ENCODE measurements at regions of chr7 and their contacts with region 1.

Region 1: GRCh38 chr7:85030893-85031292 is 156.0 kb downstream of the SEMA3D start:
- DNase-seq: peak; percentile 83
- H3K4me3 ChIP-seq: no peak overlapping the region
- H3K27ac ChIP-seq: no peak overlapping the region
- H3K4me1 ChIP-seq: peaks cover 5% of the 10 kb centered on the region
- H3K27me3 ChIP-seq: no peaks in the 10 kb centered on the region
- CTCF ChIP-seq: peak; percentile 75

Region 2: DNA sequence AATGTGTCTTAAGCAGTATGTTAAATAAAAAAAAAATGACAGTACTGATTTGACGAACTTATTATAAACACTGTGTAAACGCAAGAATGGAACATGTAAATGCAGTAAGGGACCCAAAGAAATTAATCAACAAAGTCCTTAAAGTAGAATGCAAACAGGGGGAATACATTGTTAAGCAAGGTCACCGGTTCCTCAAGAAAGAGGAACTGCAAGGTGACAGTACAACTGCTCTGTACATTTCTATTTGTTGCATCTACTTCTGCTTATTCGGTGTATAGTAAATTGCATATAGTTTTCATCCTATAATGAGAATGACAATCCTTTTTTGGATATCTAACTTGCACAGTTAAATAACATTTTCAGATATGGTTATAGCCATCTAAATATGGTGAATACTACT is 543.0 kb after region 1 on chr7:
- CTCF ChIA-PET with region 1: no interaction called
- POLR2A ChIA-PET with region 1: no interaction called
- intact Hi-C with region 1: no loop called
- DNase-seq: no peak
- H3K4me3 ChIP-seq: no peak overlapping the region
- H3K27ac ChIP-seq: no peak overlapping the region
- H3K4me1 ChIP-seq: no peaks in the 10 kb centered on the region
- H3K27me3 ChIP-seq: no peaks in the 10 kb centered on the region
- CTCF ChIP-seq: no peak

Region 3: DNA sequence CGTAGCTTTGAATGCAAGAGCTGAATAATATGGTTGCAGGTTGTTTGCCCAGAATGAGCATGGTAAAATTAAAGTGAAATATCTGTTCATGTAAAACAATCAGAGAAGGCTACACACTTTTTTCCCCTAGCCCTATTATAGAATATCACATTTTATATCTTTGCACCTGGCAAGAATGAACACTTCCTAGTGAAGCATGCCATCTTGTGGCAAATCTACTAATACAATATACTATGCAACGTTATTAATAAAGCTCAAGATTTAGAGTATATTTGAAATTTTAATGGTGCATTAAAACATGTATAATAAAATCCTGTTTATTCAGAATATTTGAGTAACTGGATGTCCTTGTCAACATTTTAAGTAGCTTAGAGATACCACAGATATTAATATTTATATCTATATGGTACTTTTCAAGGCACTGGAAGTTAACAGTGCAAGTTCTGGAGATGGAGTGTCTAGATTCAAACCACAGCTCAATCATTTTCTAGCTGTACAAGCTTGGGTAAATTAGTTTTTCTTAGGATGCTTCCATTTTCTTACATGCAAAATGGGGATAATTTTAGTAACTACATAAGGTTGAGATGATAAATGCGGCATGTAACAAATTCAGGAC is 799.0 kb after region 1 on chr7:
- CTCF ChIA-PET with region 1: interaction called, 6 read pairs
- POLR2A ChIA-PET with region 1: no interaction called
- intact Hi-C with region 1: loop called (anchors 5 kb)
- DNase-seq: peak; percentile 36
- H3K4me3 ChIP-seq: no peak overlapping the region
- H3K27ac ChIP-seq: no peak overlapping the region
- H3K4me1 ChIP-seq: no peaks in the 10 kb centered on the region
- H3K27me3 ChIP-seq: no peaks in the 10 kb centered on the region
- CTCF ChIP-seq: peak; percentile 56

Region 4: DNA sequence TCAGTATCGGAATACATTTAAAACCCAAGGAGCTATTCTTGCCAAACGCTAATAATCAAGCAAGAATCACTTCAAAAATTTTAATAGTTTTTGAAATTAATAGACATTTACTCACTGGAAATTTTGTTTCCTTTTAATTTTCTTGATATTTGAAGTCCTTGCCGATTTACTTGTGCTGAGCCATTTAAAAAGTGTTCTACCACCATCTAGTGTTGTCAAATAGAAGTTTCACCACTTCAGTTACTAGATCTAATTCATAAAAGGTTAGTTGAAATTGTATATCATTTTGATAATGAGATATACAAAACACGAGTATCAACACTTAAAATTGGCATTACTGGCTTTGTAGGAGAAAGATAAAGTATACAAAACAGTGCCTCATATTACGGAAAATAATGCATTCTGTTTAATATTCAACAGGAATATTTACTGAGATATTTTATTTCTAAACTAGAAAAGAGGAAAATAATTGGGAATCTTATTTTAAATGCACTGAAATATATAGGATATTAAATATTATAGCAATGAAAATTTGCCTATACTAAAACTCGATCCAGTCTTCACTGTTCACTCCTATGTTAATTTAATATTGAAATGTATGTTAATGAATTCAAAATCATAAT is 820.8 kb after region 1 on chr7:
- CTCF ChIA-PET with region 1: no interaction called
- POLR2A ChIA-PET with region 1: no interaction called
- intact Hi-C with region 1: loop called (anchors 5 kb)
- DNase-seq: peak; percentile 44
- H3K4me3 ChIP-seq: no peak overlapping the region
- H3K27ac ChIP-seq: no peak overlapping the region
- H3K4me1 ChIP-seq: no peaks in the 10 kb centered on the region
- H3K27me3 ChIP-seq: no peaks in the 10 kb centered on the region
- CTCF ChIP-seq: peak; percentile 60

Measured in A673 (cell line).